PC-9 (cell line): ENCODE measurements at regions of chr12 and their contacts with region 1.

Region 1: DNA sequence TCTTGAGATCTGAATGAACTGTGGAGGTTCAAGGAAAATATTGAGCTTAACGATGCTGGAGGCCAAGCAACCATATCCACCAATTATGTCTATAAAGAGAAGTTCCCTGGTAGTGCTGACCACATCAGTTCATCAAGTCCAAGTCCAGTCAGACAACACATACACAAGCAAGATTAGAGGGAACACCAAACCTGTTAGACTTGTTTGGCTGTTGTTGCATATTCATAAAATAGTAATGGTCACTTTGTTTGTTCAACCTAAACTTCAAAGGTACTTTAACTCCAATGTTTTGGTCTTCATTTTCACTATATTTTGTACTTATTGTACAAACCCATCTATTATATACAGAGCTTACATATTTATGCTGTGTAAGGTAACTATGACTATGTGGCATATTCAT is 81.5 kb downstream of the LMO3 start:
- DNase-seq: peak; percentile 17 to 91
- H3K4me3 ChIP-seq: peak overlapping the region; percentile 35; the same call in 1 of the 2 replicates
- H3K27ac ChIP-seq: peak overlapping the region; percentile 86
- H3K4me1 ChIP-seq: peaks cover 30% of the 10 kb centered on the region
- H3K27me3 ChIP-seq: no peaks in the 10 kb centered on the region
- CTCF ChIP-seq: no peak

Region 2: GRCh38 chr12:16369156-16369555 is 155.3 kb before region 1 on chr12:
- CTCF ChIA-PET with region 1: no interaction called
- POLR2A ChIA-PET with region 1: no interaction called
- intact Hi-C with region 1: no loop called
- DNase-seq: no peak
- H3K4me3 ChIP-seq: no peak overlapping the region
- H3K27ac ChIP-seq: no peak overlapping the region
- H3K4me1 ChIP-seq: no peaks in the 10 kb centered on the region
- H3K27me3 ChIP-seq: no peaks in the 10 kb centered on the region
- CTCF ChIP-seq: no peak

Region 3: DNA sequence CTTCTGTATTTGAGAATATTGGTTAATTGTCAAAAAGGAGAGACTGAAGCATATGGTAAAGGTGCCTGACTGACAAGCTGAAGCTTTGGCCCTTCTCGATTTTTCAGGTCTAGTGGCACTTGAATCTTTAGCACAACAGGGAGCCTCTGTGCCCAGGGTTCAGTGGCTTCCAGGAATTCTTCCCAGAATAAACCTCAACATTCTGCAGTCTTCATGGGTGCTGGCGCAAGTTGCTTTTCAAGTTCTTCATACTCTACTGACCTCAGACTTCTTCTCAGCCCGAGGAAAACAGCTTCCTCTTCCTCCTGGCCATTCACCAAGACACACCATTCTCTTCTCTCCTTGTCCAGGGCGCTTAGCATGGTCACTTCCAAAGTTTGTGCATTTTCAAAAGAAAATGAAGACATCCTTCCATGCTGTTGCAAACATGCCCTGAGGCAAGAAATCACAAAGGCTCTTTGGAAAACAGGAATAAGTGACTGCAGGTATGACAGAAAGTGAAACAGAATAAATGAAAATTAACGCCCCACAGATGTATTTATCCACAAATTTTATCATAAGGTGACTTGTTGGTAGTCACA is 87.0 kb before region 1 on chr12:
- CTCF ChIA-PET with region 1: no interaction called
- POLR2A ChIA-PET with region 1: no interaction called
- intact Hi-C with region 1: loop called (anchors 1 kb)
- DNase-seq: peak; percentile 36 to 42
- H3K4me3 ChIP-seq: no peak overlapping the region
- H3K27ac ChIP-seq: no peak overlapping the region
- H3K4me1 ChIP-seq: peaks cover 7% of the 10 kb centered on the region; the same call in 1 of the 2 replicates
- H3K27me3 ChIP-seq: no peaks in the 10 kb centered on the region
- CTCF ChIP-seq: no peak

Region 4: DNA sequence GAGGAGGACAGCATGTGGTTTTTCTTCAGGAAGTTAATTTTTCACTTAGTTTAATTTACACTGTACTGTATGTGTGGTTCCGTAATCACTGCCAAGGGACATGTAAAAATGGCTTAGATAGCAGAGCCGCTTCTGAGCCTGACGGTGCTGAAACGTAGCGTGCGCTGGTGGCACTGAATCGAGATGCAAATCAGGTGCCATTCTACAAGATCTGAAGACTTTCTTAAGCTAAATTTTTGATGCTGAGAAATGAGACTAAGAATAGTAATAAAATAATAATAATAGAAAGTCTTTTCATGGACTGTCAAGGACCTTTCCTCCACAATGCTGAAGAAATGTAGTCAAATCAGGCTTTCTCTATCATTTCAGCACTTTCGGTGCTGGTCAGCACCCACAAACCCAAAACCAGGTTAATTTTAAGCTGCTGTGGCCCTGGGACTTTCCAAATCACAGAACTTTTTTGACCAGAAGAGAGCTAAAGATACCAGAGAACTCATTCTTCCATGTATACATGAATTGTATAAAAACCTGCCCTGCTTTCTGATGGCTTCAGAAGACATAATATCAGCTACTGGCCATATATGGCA is 264.9 kb after region 1 on chr12:
- CTCF ChIA-PET with region 1: no interaction called
- POLR2A ChIA-PET with region 1: no interaction called
- intact Hi-C with region 1: no loop called
- DNase-seq: no peak
- H3K4me3 ChIP-seq: no peak overlapping the region
- H3K27ac ChIP-seq: no peak overlapping the region
- H3K4me1 ChIP-seq: no peaks in the 10 kb centered on the region
- H3K27me3 ChIP-seq: no peaks in the 10 kb centered on the region
- CTCF ChIP-seq: no peak